Activated T-helper 1 cell treated with anti-CD3 and anti-CD28 coated beads, Interleukin-12 subunit alpha, Interleukin-12 subunit beta, Interleukin-2, Interleukin-4 antibody, amounts not matched to agents 30 ng/mL and 10 ng/mL and 1 ng/mL, durations not matched to agents 14 hours and 24 hours and 36 hours (primary cell): ENCODE measurements at regions of chr6 and their contacts with region 1.

Region 1: GRCh38 chr6:33248925-33249731 is 22.5 kb downstream of the VPS52 start:
- DNase-seq: peak; percentile 95
- H3K4me3 Mint-ChIP-seq: peak overlapping the region; percentile 91
- H3K27ac Mint-ChIP-seq: peak overlapping the region; percentile 84
- H3K4me1 Mint-ChIP-seq: peaks cover 44% of the 10 kb centered on the region
- H3K27me3 Mint-ChIP-seq: peaks cover 4% of the 10 kb centered on the region

Region 2: DNA sequence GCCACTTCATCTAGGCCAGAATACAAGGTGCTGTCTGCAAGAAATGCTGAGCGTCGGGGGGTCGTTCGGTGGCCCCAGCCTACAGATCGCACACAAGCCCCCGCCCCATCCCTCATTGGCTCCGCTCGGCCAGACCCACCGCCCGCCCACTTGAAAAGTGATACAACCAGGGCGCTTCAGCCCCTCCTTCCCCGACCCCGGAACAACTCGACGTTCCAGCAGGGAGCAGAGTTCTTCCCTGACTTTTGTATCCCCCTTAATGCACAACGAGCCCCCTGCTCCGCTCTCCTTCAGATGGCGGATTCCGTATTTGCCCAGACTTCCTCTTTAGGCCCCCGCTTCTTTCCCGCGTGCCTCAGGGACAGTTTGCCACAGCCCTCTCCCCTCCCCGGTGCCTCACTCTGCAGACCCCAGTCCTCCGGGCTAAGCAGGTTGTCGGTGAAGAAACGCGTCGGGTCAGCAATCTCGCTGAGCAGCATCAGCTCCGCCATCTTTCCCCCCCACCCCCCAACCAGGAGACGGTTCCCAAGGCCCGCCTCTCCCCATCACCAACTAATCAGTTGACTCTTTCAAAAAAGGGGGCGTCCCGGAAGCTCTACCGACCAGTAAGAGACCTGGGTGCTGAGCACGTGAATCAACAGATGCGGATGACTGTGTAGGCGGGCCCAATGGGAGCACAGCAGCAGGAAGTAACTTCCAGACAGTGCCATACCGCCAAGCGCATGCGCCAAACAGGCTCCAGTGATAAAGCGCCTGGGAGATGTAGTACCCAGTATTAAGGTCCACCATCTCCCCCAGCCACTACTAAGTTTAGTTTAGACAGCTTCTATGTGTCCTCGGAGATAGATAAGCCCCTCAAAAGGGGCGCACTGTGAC is 1121.2 kb before region 1 on chr6 and contains the start of gene ATF6B:
- intact Hi-C with region 1: loop called (anchors 1 kb)
- DNase-seq: peak; percentile 95
- H3K4me3 Mint-ChIP-seq: peak within 1 kb of the TSS; percentile 99
- H3K27ac Mint-ChIP-seq: peak within 1 kb of the TSS; percentile 94
- H3K4me1 Mint-ChIP-seq: peaks cover 45% of the 10 kb centered on the region
- H3K27me3 Mint-ChIP-seq: peaks cover 2% of the 10 kb centered on the region
- total RNA-seq, gene ATF6B: 80.1 and 97.6 TPM in 2 replicates

Region 3: DNA sequence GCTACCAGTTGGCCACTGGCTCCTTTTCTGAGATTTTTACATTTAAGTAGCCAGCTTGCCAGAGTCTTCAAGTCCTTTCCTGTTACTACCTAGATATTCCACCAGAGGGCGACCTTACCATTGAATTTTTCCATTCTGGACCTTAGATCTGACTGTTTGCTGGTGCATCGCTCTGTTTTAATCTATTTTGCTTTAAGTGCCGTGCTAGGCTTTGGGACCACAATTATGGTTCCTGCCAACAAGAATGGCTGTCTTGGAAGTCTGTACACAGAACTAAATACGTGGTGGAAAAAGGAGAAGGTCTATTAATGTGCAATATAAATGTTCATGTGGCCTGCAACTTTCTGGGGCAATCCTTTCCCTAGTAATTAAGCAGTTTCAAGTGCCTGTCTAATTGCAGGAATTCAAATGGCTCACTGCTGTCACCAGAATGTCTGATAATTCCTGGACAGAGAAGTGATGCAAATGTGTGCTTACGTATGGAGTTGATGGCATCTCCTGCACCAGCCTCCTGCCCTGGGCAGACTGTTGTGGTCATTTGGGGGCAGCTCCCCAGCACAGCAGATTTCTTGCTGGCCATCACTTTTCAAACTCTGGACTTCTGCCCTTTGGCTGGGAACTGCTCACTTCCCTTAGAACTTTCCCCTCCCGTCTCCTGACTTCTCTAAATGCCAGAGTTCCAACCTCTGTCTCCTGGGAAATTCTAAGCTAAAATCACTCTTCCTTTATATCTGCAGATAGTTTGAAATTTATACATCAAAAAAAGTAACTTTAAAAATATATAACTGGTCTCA is 234.1 kb before region 1 on chr6:
- intact Hi-C with region 1: loop called (anchors 1 kb)
- DNase-seq: peak; percentile 58
- H3K4me3 Mint-ChIP-seq: no peak overlapping the region
- H3K27ac Mint-ChIP-seq: no peak overlapping the region
- H3K4me1 Mint-ChIP-seq: peaks cover 31% of the 10 kb centered on the region
- H3K27me3 Mint-ChIP-seq: peaks cover 8% of the 10 kb centered on the region

Region 4: GRCh38 chr6:33118525-33119123 is 130.5 kb before region 1 on chr6:
- intact Hi-C with region 1: loop called (anchors 1 kb)
- DNase-seq: no peak
- H3K4me3 Mint-ChIP-seq: no peak overlapping the region
- H3K27ac Mint-ChIP-seq: no peak overlapping the region
- H3K4me1 Mint-ChIP-seq: peaks cover 15% of the 10 kb centered on the region
- H3K27me3 Mint-ChIP-seq: peaks cover 68% of the 10 kb centered on the region

Region 5: GRCh38 chr6:33200219-33201146 is 48.6 kb before region 1 on chr6 and contains the starts of genes RXRB and SLC39A7:
- intact Hi-C with region 1: loop called (anchors 1 kb)
- DNase-seq: peak; percentile 97
- H3K4me3 Mint-ChIP-seq: peak within 1 kb of the TSS; percentile 100
- H3K27ac Mint-ChIP-seq: peak within 1 kb of the TSS; percentile 97
- H3K4me1 Mint-ChIP-seq: peaks cover 75% of the 10 kb centered on the region
- H3K27me3 Mint-ChIP-seq: no peaks in the 10 kb centered on the region
- total RNA-seq, gene RXRB: 46.6 and 47.4 TPM in 2 replicates
- total RNA-seq, gene SLC39A7: 67.1 and 68.8 TPM in 2 replicates

Region 6: DNA sequence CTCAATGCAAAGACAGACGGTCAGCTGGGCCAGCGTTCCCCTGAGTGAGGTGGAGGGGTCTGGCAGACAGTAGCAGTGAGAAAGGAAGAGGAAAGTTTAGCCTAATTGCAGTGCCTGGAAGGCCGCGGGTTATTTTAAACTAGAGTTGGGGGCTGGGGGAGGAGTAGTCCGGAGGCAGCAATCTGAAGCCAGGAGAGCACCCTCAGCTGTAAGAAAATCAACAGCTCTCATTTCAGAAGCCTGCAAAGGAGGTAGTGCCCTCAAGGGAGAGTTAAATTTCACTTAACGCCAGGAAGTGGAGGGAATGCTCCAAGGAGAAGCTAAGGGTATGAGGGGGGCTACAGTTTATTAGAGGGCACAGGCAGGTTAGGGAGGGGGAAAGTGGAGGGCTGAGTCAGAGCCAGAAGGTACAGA is 13.9 kb before region 1 on chr6:
- intact Hi-C with region 1: no loop called
- DNase-seq: no peak
- H3K4me3 Mint-ChIP-seq: no peak overlapping the region
- H3K27ac Mint-ChIP-seq: no peak overlapping the region
- H3K4me1 Mint-ChIP-seq: no peaks in the 10 kb centered on the region
- H3K27me3 Mint-ChIP-seq: peaks cover 25% of the 10 kb centered on the region

Region 7: GRCh38 chr6:33276864-33277662 is 27.9 kb after region 1 on chr6 and contains the start of gene B3GALT4:
- intact Hi-C with region 1: loop called (anchors 1 kb)
- DNase-seq: peak; percentile 75
- H3K4me3 Mint-ChIP-seq: peak within 1 kb of the TSS; percentile 97
- H3K27ac Mint-ChIP-seq: peak within 1 kb of the TSS; percentile 91
- H3K4me1 Mint-ChIP-seq: peaks cover 56% of the 10 kb centered on the region
- H3K27me3 Mint-ChIP-seq: no peaks in the 10 kb centered on the region
- total RNA-seq, gene B3GALT4: 4.4 and 5.6 TPM in 2 replicates

Region 8: GRCh38 chr6:33317669-33318425 is 68.7 kb after region 1 on chr6 and contains the start of gene ZBTB22:
- intact Hi-C with region 1: loop called (anchors 1 kb)
- DNase-seq: peak; percentile 92
- H3K4me3 Mint-ChIP-seq: peak within 1 kb of the TSS; percentile 97
- H3K27ac Mint-ChIP-seq: peak within 1 kb of the TSS; percentile 94
- H3K4me1 Mint-ChIP-seq: peaks cover 74% of the 10 kb centered on the region
- H3K27me3 Mint-ChIP-seq: no peaks in the 10 kb centered on the region
- total RNA-seq, gene ZBTB22: 12.5 and 14.7 TPM in 2 replicates

Region 9: GRCh38 chr6:33417903-33418689 is 169.0 kb after region 1 on chr6 and contains the start of gene CUTA:
- intact Hi-C with region 1: no loop called
- DNase-seq: peak; percentile 98
- H3K4me3 Mint-ChIP-seq: peak within 1 kb of the TSS; percentile 95
- H3K27ac Mint-ChIP-seq: peak within 1 kb of the TSS; percentile 96
- H3K4me1 Mint-ChIP-seq: peaks cover 70% of the 10 kb centered on the region
- H3K27me3 Mint-ChIP-seq: no peaks in the 10 kb centered on the region
- total RNA-seq, gene CUTA: 131 and 137 TPM in 2 replicates